ENCODE measurements at regions of chr4 and their contacts with region 1.

Region 1: GRCh38 chr4:94782707-94783106 is 25.0 kb downstream of the BMPR1B start:
- DNase-seq: no peak

Region 2: GRCh38 chr4:94759767-94760211 is 22.9 kb before region 1 on chr4:
- intact Hi-C with region 1: loop called (anchors 2 kb)
- DNase-seq: no peak

Measured in head of caudate nucleus (tissue), 42 donors.